OCI-LY7 (cell line): ENCODE measurements at regions of chr22 and their contacts with region 1.

Region 1: GRCh38 chr22:21952586-21953571 is at the start of gene PPM1F:
- DNase-seq: peak; percentile 89
- H3K4me3 ChIP-seq: peak within 1 kb of the TSS; percentile 74
- H3K27ac ChIP-seq: no peak within 1 kb of the TSS
- H3K4me1 ChIP-seq: peaks cover 6% of the 10 kb centered on the region
- CTCF ChIP-seq: peak; percentile 90
- total RNA-seq, gene PPM1F: 21.7 and 35.4 TPM in 2 replicates

Region 2: GRCh38 chr22:21712894-21713712 is 239.8 kb before region 1 on chr22:
- CTCF ChIA-PET with region 1: no interaction called
- POLR2A ChIA-PET with region 1: no interaction called
- intact Hi-C with region 1: loop called (anchors 2 kb)
- DNase-seq: peak; percentile 84
- H3K4me3 ChIP-seq: no peak overlapping the region
- H3K27ac ChIP-seq: no peak overlapping the region
- H3K4me1 ChIP-seq: peaks cover 13% of the 10 kb centered on the region
- CTCF ChIP-seq: peak; percentile 92

Region 3: GRCh38 chr22:22009661-22010060 is 56.8 kb after region 1 on chr22:
- CTCF ChIA-PET with region 1: no interaction called
- POLR2A ChIA-PET with region 1: no interaction called
- intact Hi-C with region 1: no loop called
- DNase-seq: no peak
- H3K4me3 ChIP-seq: no peak overlapping the region
- H3K27ac ChIP-seq: no peak overlapping the region
- H3K4me1 ChIP-seq: no peaks in the 10 kb centered on the region
- CTCF ChIP-seq: no peak